ENCODE measurements at regions of chr2 and their contacts with region 1.

Region 1: GRCh38 chr2:108583903-108584520 is 49.7 kb downstream of the LIMS1 start:
- DNase-seq: peak; percentile 24
- H3K4me3 Mint-ChIP-seq: no peak overlapping the region
- H3K27ac Mint-ChIP-seq: no peak overlapping the region
- H3K4me1 Mint-ChIP-seq: peaks cover 43% of the 10 kb centered on the region
- H3K27me3 Mint-ChIP-seq: no peaks in the 10 kb centered on the region

Region 2: GRCh38 chr2:107936433-107937359 is 647.3 kb before region 1 on chr2:
- intact Hi-C with region 1: loop called (anchors 5 kb)
- DNase-seq: no peak
- H3K4me3 Mint-ChIP-seq: no peak overlapping the region
- H3K27ac Mint-ChIP-seq: no peak overlapping the region
- H3K4me1 Mint-ChIP-seq: no peaks in the 10 kb centered on the region
- H3K27me3 Mint-ChIP-seq: no peaks in the 10 kb centered on the region

Region 3: GRCh38 chr2:108194409-108195132 is 389.4 kb before region 1 on chr2:
- intact Hi-C with region 1: loop called (anchors 10 kb)
- DNase-seq: no peak
- H3K4me3 Mint-ChIP-seq: no peak overlapping the region
- H3K27ac Mint-ChIP-seq: no peak overlapping the region
- H3K4me1 Mint-ChIP-seq: no peaks in the 10 kb centered on the region
- H3K27me3 Mint-ChIP-seq: no peaks in the 10 kb centered on the region

Region 4: DNA sequence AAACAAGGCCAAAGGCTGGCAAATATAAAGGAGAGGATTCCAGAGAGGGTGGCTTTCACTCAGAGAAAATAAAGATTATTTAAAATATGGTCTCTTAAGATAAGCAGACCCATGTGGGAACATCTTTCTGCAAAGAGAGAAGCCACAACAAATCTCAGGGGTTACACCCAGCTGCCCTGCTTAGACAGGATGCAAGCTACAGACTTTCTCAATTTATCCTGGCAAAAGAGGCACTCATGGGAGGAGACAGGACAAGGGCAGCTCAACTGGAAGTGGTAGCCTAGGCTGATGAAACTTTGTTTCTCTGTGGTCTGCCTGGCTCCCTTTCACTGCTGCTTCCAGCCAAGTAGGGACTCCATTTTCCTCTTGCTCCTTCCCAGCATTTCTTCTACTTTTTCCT is 232.1 kb before region 1 on chr2:
- intact Hi-C with region 1: loop called (anchors 1 kb)
- DNase-seq: no peak
- H3K4me3 Mint-ChIP-seq: no peak overlapping the region
- H3K27ac Mint-ChIP-seq: no peak overlapping the region
- H3K4me1 Mint-ChIP-seq: no peaks in the 10 kb centered on the region
- H3K27me3 Mint-ChIP-seq: peaks cover 10% of the 10 kb centered on the region

Region 5: GRCh38 chr2:108417255-108417654 is 166.8 kb before region 1 on chr2:
- intact Hi-C with region 1: loop called (anchors 10 kb)
- DNase-seq: no peak
- H3K4me3 Mint-ChIP-seq: no peak overlapping the region
- H3K27ac Mint-ChIP-seq: no peak overlapping the region
- H3K4me1 Mint-ChIP-seq: no peaks in the 10 kb centered on the region
- H3K27me3 Mint-ChIP-seq: peaks cover 4% of the 10 kb centered on the region

Region 6: GRCh38 chr2:108448678-108449493 is 135.1 kb before region 1 on chr2 and contains the start of gene GCC2:
- intact Hi-C with region 1: loop called (anchors 2 kb)
- DNase-seq: peak; percentile 94
- H3K4me3 Mint-ChIP-seq: peak within 1 kb of the TSS; percentile 93
- H3K27ac Mint-ChIP-seq: peak within 1 kb of the TSS; percentile 95
- H3K4me1 Mint-ChIP-seq: peaks cover 39% of the 10 kb centered on the region
- H3K27me3 Mint-ChIP-seq: no peaks in the 10 kb centered on the region
- total RNA-seq, gene GCC2: 38.8 and 42.7 TPM in 2 replicates

Region 7: DNA sequence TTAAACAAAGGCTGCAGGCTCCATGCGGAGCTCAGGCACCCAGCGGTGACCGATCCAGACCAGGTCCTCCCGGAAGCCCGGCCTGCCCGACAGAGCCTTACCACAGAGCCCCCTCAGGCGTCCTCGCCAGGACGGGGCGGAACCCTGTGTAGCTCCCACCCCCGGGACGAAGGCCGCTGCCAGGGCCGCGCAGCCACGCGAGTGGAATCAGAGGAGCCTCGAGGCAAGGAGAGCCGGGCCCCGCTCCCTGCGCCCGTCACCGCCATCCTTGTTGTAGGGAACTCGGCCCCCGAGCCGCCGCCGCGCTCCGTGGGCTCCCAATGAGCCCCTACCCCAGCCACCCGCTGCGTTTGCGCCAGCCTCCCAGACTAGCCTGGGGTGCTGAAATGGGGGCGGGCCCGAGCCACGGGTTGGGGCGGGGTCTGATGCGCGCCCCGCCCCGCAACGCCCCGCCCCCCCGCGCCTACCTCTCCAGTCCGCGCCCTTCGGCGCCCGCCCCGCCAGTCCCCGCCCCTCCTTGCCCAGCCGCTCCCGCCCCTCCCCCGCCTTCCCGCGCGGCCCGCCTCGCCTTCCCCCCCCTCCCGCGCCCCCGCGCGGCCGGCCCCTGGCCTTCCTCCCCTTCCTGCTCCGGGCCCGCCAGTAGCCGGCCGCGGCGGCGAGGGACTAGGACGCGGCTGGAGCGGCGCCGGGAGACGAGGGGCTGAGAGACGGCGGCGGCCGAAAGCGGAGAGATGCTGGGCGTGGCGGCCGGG is 50.0 kb before region 1 on chr2 and contains the start of gene LIMS1:
- intact Hi-C with region 1: loop called (anchors 5 kb)
- DNase-seq: peak; percentile 77
- H3K4me3 Mint-ChIP-seq: peak within 1 kb of the TSS; percentile 96
- H3K27ac Mint-ChIP-seq: peak within 1 kb of the TSS; percentile 97
- H3K4me1 Mint-ChIP-seq: peaks cover 52% of the 10 kb centered on the region
- H3K27me3 Mint-ChIP-seq: no peaks in the 10 kb centered on the region
- total RNA-seq, gene LIMS1: 48.4 and 49.1 TPM in 2 replicates